MCF 10A (cell line): ENCODE measurements at regions of chr1 and their contacts with region 1.

Region 1: GRCh38 chr1:43414634-43415223 is 25.0 kb downstream of the SZT2 start:
- DNase-seq: peak; percentile 52
- H3K4me3 Mint-ChIP-seq: no peak overlapping the region
- H3K27ac Mint-ChIP-seq: peak overlapping the region; percentile 21
- H3K4me1 Mint-ChIP-seq: no peaks in the 10 kb centered on the region
- H3K27me3 Mint-ChIP-seq: no peaks in the 10 kb centered on the region
- CTCF ChIP-seq: peak; percentile 37

Region 2: GRCh38 chr1:43238085-43238484 is 176.6 kb before region 1 on chr1:
- CTCF ChIA-PET with region 1: interaction called, 9 read pairs
- POLR2A ChIA-PET with region 1: no interaction called
- intact Hi-C with region 1: loop called (anchors 1 kb)
- DNase-seq: peak; percentile 78
- H3K4me3 Mint-ChIP-seq: no peak overlapping the region
- H3K27ac Mint-ChIP-seq: peak overlapping the region; percentile 3
- H3K4me1 Mint-ChIP-seq: peaks cover 21% of the 10 kb centered on the region
- H3K27me3 Mint-ChIP-seq: no peaks in the 10 kb centered on the region
- CTCF ChIP-seq: peak; percentile 53